Activated B cell treated with CpG ODN at 0.5 μM for 24 hours (primary cell): ENCODE measurements at regions of chr18 and their contacts with region 1.

Region 1: GRCh38 chr18:76803814-76804213 is 18.5 kb upstream of the ZNF236 start:
- DNase-seq: peak; percentile 41
- ATAC-seq: peak; percentile 69
- H3K4me3 Mint-ChIP-seq: no peak overlapping the region
- H3K27ac Mint-ChIP-seq: no peak overlapping the region
- H3K4me1 Mint-ChIP-seq: peaks cover 11% of the 10 kb centered on the region
- H3K27me3 Mint-ChIP-seq: peaks cover 3% of the 10 kb centered on the region
- CTCF ChIP-seq: peak; percentile 86

Region 2: GRCh38 chr18:76492669-76493212 is 311.1 kb before region 1 on chr18:
- CTCF ChIA-PET with region 1: no interaction called
- POLR2A ChIA-PET with region 1: no interaction called
- intact Hi-C with region 1: loop called (anchors 5 kb)
- DNase-seq: peak; percentile 98
- ATAC-seq: peak; percentile 73
- H3K4me3 Mint-ChIP-seq: peak overlapping the region; percentile 91
- H3K27ac Mint-ChIP-seq: peak overlapping the region; percentile 88
- H3K4me1 Mint-ChIP-seq: peaks cover 36% of the 10 kb centered on the region
- H3K27me3 Mint-ChIP-seq: peaks cover 16% of the 10 kb centered on the region
- CTCF ChIP-seq: no peak

Region 3: DNA sequence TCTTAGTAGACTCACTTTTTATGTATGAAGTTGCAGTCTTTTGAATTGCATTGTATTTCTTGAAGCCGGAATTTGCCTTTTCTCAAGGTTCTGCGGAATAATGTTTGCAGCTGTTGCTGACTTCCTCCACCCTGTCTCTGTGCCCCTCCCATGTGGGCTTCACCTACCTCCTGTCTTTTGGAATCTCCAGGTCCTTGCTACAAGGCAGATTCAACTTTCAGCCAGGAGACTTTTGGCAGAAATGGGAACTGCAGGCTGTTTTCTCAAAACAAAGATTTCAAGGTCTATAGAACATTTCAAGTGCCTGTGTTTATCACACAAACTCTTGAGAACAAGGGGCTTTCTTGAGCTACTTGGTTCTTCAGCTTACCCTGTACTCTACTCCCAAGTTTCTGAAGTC is 44.1 kb after region 1 on chr18:
- CTCF ChIA-PET with region 1: interaction called, 12 read pairs
- POLR2A ChIA-PET with region 1: no interaction called
- intact Hi-C with region 1: no loop called
- DNase-seq: no peak
- ATAC-seq: no peak
- H3K4me3 Mint-ChIP-seq: no peak overlapping the region
- H3K27ac Mint-ChIP-seq: no peak overlapping the region
- H3K4me1 Mint-ChIP-seq: peaks cover 12% of the 10 kb centered on the region
- H3K27me3 Mint-ChIP-seq: no peaks in the 10 kb centered on the region
- CTCF ChIP-seq: no peak

Region 4: DNA sequence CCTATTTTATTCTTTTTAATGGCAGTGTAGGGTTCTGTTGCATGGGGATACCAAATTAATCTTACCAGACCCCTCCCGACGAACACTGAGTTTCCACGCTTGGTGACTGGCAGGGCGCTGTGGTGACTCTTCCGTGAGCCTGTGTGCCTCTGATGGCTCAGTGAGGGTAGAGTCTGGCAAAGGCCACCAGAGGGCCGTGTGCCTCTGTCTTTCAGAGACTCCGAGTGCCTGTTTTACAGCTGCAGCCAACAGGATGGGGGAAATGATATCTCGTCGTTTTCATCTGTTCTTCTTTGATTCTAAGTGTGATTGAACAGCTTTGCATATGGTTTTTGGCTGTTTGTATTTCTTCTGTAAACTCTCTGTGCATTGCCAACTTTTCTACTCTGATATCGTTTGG is 118.3 kb after region 1 on chr18:
- CTCF ChIA-PET with region 1: interaction called, 5 read pairs
- POLR2A ChIA-PET with region 1: no interaction called
- intact Hi-C with region 1: loop called (anchors 1 kb)
- DNase-seq: peak; percentile 39
- ATAC-seq: peak; percentile 100
- H3K4me3 Mint-ChIP-seq: peak overlapping the region; percentile 13
- H3K27ac Mint-ChIP-seq: peak overlapping the region; percentile 57
- H3K4me1 Mint-ChIP-seq: peaks cover 8% of the 10 kb centered on the region
- H3K27me3 Mint-ChIP-seq: no peaks in the 10 kb centered on the region
- CTCF ChIP-seq: no peak

Region 5: GRCh38 chr18:77079954-77080682 is 276.3 kb after region 1 on chr18:
- CTCF ChIA-PET with region 1: no interaction called
- POLR2A ChIA-PET with region 1: no interaction called
- intact Hi-C with region 1: no loop called
- DNase-seq: peak; percentile 60
- ATAC-seq: peak; percentile 99
- H3K4me3 Mint-ChIP-seq: peak overlapping the region; percentile 45
- H3K27ac Mint-ChIP-seq: peak overlapping the region; percentile 84
- H3K4me1 Mint-ChIP-seq: peaks cover 52% of the 10 kb centered on the region
- H3K27me3 Mint-ChIP-seq: no peaks in the 10 kb centered on the region
- CTCF ChIP-seq: no peak

Region 6: DNA sequence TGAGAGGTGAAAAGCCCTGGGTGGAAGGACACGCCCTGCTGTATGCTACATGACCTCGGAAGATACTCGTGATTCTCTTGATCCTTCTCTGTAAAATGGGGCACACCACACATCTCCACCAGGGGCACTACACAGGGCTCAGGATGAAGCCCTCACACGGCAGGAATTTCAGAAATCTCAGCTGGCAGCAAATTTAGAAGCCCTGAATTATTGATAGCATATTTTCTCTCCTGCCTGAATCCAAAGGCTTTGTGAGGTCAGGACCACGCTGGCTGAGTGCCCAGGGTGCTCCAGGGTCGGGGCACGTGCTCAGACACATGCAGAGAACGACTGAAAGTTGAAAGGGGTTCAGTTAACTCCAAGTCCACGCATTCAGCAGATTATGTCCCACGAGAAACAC is 403.7 kb after region 1 on chr18:
- CTCF ChIA-PET with region 1: interaction called, 10 read pairs
- POLR2A ChIA-PET with region 1: no interaction called
- intact Hi-C with region 1: loop called (anchors 1 kb)
- DNase-seq: no peak
- ATAC-seq: peak; percentile 87
- H3K4me3 Mint-ChIP-seq: peak overlapping the region; percentile 64
- H3K27ac Mint-ChIP-seq: peak overlapping the region; percentile 74
- H3K4me1 Mint-ChIP-seq: peaks cover 25% of the 10 kb centered on the region
- H3K27me3 Mint-ChIP-seq: peaks cover 2% of the 10 kb centered on the region
- CTCF ChIP-seq: no peak

Region 7: DNA sequence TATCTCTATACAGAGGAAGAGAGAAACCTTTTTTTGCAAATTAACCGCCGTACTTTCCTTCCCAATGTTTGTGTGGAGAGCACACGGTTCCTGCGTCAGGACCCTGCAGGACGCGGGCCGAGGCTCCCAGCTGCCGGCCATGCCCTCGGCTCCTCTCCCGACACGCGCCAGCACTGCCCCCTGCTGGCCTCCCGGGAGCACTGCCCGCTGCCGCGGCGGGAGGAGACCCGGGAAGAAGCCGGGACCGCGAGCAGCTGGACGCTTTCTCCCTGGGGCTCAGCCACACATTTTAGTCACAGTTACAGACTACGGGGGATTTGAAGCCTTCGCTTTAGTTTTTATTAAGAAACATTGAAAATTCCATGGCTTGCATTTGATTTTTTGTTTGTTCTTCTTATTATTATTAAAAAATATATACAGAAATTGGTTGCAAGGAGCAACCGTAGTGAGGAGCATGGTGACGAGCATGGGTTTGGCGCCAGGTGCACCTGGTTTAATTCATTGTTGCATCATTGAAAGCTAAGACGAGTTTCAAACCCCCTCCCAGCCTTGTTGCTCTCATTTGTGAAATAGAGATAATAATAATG is 847.1 kb after region 1 on chr18:
- CTCF ChIA-PET with region 1: interaction called, 17 read pairs
- POLR2A ChIA-PET with region 1: no interaction called
- intact Hi-C with region 1: loop called (anchors 1 kb)
- DNase-seq: peak; percentile 35
- ATAC-seq: peak; percentile 47
- H3K4me3 Mint-ChIP-seq: no peak overlapping the region
- H3K27ac Mint-ChIP-seq: no peak overlapping the region
- H3K4me1 Mint-ChIP-seq: no peaks in the 10 kb centered on the region
- H3K27me3 Mint-ChIP-seq: peaks cover 23% of the 10 kb centered on the region
- CTCF ChIP-seq: no peak